CD8-positive, alpha-beta T cell (primary cell): ENCODE measurements at regions of chr3 and their contacts with region 1.

Region 1: GRCh38 chr3:105729667-105730066 is 139.1 kb downstream of the CBLB start:
- DNase-seq: no peak
- ATAC-seq: no peak
- H3K4me3 ChIP-seq: no peak overlapping the region
- H3K4me3 Mint-ChIP-seq: no peak overlapping the region
- H3K27ac ChIP-seq: no peak overlapping the region
- H3K27ac Mint-ChIP-seq: no peak overlapping the region
- H3K4me1 ChIP-seq: no peaks in the 10 kb centered on the region
- H3K4me1 Mint-ChIP-seq: peaks cover 26% of the 10 kb centered on the region
- H3K27me3 ChIP-seq: no peaks in the 10 kb centered on the region
- H3K27me3 Mint-ChIP-seq: no peaks in the 10 kb centered on the region
- CTCF ChIP-seq: no peak

Region 2: DNA sequence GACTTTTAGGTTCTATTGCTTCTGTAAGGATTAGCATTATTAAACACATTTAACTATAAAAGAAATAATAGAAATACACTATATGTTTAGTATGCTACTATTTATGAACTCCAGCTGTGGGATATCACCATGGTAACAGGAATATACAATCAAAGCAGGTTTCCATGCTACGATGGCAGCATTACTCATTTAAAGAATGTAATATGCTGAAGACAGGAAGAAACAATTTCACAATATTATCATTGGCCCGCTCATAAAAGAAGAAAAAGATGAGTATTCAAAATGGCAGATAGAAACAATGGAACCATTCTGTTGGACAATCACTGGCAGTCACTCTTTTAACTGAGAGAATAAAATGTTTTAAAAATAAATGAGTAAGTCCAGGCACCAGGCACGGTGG is 14.3 kb before region 1 on chr3:
- CTCF ChIA-PET with region 1: no interaction called
- POLR2A ChIA-PET with region 1: no interaction called
- intact Hi-C with region 1: loop called in 1 of 2 experiments (anchors 2 kb)
- DNase-seq: no peak
- ATAC-seq: no peak
- H3K4me3 ChIP-seq: no peak overlapping the region
- H3K4me3 Mint-ChIP-seq: no peak overlapping the region
- H3K27ac ChIP-seq: no peak overlapping the region
- H3K27ac Mint-ChIP-seq: no peak overlapping the region
- H3K4me1 ChIP-seq: no peaks in the 10 kb centered on the region
- H3K4me1 Mint-ChIP-seq: peaks cover 17% of the 10 kb centered on the region
- H3K27me3 ChIP-seq: no peaks in the 10 kb centered on the region
- H3K27me3 Mint-ChIP-seq: no peaks in the 10 kb centered on the region
- CTCF ChIP-seq: no peak

Region 3: DNA sequence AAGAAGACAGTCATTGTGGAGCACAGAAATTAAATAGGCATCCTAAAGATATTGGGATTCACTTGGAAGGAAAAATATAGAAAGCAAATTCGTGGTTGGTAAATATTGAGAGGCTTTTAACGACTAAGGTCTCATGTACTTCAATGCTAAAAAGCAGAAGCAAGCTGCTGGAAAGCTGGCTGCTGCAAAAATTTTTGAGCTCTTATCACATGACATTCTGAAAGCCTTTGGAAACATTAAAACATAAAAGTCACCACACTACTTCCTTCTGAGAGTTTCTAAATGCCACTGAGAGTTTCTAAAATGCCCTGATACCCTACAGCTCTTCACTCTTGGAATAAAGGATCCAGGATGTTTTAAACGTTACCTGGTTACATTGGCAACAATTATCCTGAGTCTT is 178.1 kb after region 1 on chr3:
- CTCF ChIA-PET with region 1: no interaction called
- POLR2A ChIA-PET with region 1: no interaction called
- intact Hi-C with region 1: no loop called
- DNase-seq: peak in 1 of 9 experiments; percentile 12
- ATAC-seq: no peak
- H3K4me3 ChIP-seq: no peak overlapping the region
- H3K4me3 Mint-ChIP-seq: no peak overlapping the region
- H3K27ac ChIP-seq: no peak overlapping the region
- H3K27ac Mint-ChIP-seq: peak overlapping the region; percentile 60
- H3K4me1 ChIP-seq: peaks cover 6% of the 10 kb centered on the region
- H3K4me1 Mint-ChIP-seq: peaks cover 11% of the 10 kb centered on the region
- H3K27me3 ChIP-seq: no peaks in the 10 kb centered on the region
- H3K27me3 Mint-ChIP-seq: no peaks in the 10 kb centered on the region
- CTCF ChIP-seq: no peak